Thyroid gland (tissue), 4 donors: ENCODE measurements at regions of chr10 and their contacts with region 1.

Region 1: GRCh38 chr10:91632671-91633550 is at the start of gene PPP1R3C:
- DNase-seq: peak; percentile 81 to 82
- H3K4me3 ChIP-seq: peak within 1 kb of the TSS; percentile 12 to 45 (median 43)
- H3K27ac ChIP-seq: peak within 1 kb of the TSS in 1 of 3 donors; percentile 35
- H3K4me1 ChIP-seq: peaks cover 0 to 6% of the 10 kb centered on the region in 2 donors
- H3K27me3 ChIP-seq: no peaks in the 10 kb centered on the region
- CTCF ChIP-seq: peak in 1 of 6 experiments; percentile 16
- POLR2A ChIP-seq: peak in 1 of 2 donors; percentile 82
- total RNA-seq, gene PPP1R3C: 2.1 to 4.4 (median 2.7) TPM

Region 2: DNA sequence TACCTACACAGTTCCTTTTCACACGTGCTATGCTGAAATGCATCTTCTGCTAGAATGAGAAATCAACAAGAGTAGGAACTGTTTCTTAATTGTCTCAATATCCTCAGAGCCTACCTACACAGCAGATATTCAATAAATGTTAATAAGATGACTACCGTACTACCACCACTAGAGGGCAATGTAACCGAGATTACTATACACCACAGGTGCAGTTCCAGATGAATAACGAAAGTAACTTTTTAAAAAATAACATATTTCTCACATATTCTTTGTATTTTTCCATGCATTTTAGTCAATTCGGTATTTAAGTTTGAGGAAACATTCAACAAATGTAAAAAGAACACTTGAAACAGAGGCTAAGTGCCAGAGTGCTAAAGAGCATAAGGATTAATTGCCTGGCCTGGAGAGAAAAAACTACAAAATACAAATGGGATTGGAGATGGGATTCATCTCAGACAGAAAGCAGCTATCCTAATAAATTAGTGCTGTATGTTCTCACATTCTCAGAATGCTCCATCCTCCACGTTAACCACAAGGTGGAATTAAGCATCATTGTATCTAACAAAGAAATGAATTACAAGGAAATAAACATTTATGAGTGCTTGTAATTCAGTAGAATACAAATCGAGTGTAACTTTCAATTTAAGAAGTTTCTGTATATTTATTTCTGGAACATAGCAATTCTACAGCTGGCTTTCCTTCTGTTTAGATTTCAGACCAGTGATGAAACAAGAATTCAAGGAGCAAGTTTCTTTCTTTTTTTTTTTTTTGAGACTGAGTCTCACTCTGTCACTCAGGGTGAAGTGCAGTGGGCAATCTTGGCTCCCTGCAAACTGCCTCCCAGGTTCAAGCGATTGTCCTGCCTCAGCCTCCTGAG is 243.0 kb before region 1 on chr10:
- intact Hi-C with region 1: loop called (anchors 10 kb)
- DNase-seq: no peak
- H3K4me3 ChIP-seq: no peak overlapping the region
- H3K27ac ChIP-seq: no peak overlapping the region
- H3K4me1 ChIP-seq: no peaks in the 10 kb centered on the region
- H3K27me3 ChIP-seq: no peaks in the 10 kb centered on the region
- CTCF ChIP-seq: peak; percentile 31 to 71 (median 66)
- POLR2A ChIP-seq: no peak

Region 3: GRCh38 chr10:91493313-91493712 is 139.6 kb before region 1 on chr10:
- intact Hi-C with region 1: loop called (anchors 5 kb)
- DNase-seq: no peak
- H3K4me3 ChIP-seq: no peak overlapping the region
- H3K27ac ChIP-seq: no peak overlapping the region
- H3K4me1 ChIP-seq: no peaks in the 10 kb centered on the region
- H3K27me3 ChIP-seq: no peaks in the 10 kb centered on the region
- CTCF ChIP-seq: peak in 3 of 6 experiments; percentile 36 to 67 (median 48)
- POLR2A ChIP-seq: no peak

Region 4: DNA sequence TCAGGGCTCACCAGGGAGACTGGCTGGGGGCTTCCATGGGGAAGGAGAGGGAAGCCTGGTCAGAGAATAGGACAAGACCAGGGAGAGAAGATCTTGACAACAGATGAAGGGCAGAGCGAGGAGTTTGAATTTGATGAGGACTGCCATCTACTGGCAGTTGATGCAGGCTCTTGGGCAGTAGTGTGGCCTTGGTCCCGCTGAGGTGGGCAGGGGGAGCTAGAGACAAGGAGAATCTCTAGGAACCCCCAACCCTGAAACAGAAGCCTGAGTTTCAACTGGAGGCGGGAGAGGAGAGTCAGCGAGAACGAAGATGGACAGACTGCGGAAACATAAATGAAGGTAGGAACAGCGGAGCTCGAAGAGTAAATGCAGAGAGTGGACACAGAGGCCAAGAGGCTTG is 81.1 kb before region 1 on chr10:
- intact Hi-C with region 1: loop called (anchors 10 kb)
- DNase-seq: peak in 1 of 2 donors; percentile 15
- H3K4me3 ChIP-seq: no peak overlapping the region
- H3K27ac ChIP-seq: no peak overlapping the region
- H3K4me1 ChIP-seq: no peaks in the 10 kb centered on the region
- H3K27me3 ChIP-seq: no peaks in the 10 kb centered on the region
- CTCF ChIP-seq: peak in 3 of 6 experiments; percentile 16 to 32 (median 26)
- POLR2A ChIP-seq: no peak

Region 5: GRCh38 chr10:91935884-91936283 is 303.0 kb after region 1 on chr10:
- intact Hi-C with region 1: no loop called
- DNase-seq: no peak
- H3K4me3 ChIP-seq: no peak overlapping the region
- H3K27ac ChIP-seq: no peak overlapping the region
- H3K4me1 ChIP-seq: no peaks in the 10 kb centered on the region
- H3K27me3 ChIP-seq: no peaks in the 10 kb centered on the region
- CTCF ChIP-seq: no peak
- POLR2A ChIP-seq: no peak